Mammary epithelial cell (primary cell): ENCODE measurements at regions of chr3 and their contacts with region 1.

Region 1: GRCh38 chr3:48446425-48447193 is at the start of gene ATRIP:
- DNase-seq: peak; percentile 90
- H3K4me3 ChIP-seq: peak within 1 kb of the TSS; percentile 66 to 83 (median 74)
- H3K27ac ChIP-seq: peak within 1 kb of the TSS; percentile 70
- H3K4me1 ChIP-seq: peaks cover 20% of the 10 kb centered on the region
- H3K27me3 ChIP-seq: no peaks in the 10 kb centered on the region
- CTCF ChIP-seq: no peak
- total RNA-seq, gene ATRIP: 7.2 to 13.2 TPM

Region 2: DNA sequence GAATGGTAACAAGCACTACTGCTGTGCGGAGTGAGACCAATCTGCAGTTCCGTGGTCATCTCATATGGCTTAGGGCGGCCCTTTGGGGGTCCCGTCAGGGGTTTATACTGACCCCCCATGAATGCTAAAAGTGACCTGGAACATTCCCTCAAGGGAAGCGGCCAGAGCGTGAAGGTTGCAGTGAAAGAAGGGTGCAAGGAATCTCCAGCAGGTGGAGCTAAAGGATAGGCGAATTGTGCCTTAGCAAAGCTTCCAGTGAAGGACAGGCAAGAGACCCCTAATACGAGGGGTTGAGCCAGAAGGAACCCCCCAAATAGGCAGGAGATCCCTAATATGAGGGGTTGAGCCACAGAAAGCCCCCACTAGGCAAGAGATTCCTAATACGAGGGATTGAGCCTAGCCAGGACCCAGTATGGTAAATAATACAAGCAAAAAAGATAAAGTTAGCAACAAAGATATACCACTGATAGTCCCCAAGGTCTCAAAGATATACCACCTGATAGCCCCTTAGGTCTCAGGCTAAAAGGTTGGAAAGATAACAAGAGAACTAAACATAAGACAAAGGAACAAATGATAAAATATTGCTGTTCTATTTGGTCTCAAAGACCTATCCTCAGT is 172.9 kb before region 1 on chr3:
- CTCF ChIA-PET with region 1: no interaction called
- dilution Hi-C with region 1: loop called (anchors 5 kb)
- in situ Hi-C with region 1: no loop called
- intact Hi-C with region 1: no loop called
- DNase-seq: peak; percentile 34
- H3K4me3 ChIP-seq: no peak overlapping the region
- H3K27ac ChIP-seq: no peak overlapping the region
- H3K4me1 ChIP-seq: peaks cover 15% of the 10 kb centered on the region
- H3K27me3 ChIP-seq: no peaks in the 10 kb centered on the region
- CTCF ChIP-seq: peak; percentile 84 to 86

Region 3: GRCh38 chr3:48521635-48522034 is 75.0 kb after region 1 on chr3:
- CTCF ChIA-PET with region 1: no interaction called
- dilution Hi-C with region 1: loop called (anchors 5 kb)
- in situ Hi-C with region 1: no loop called
- intact Hi-C with region 1: no loop called
- DNase-seq: no peak
- H3K4me3 ChIP-seq: no peak overlapping the region
- H3K27ac ChIP-seq: no peak overlapping the region
- H3K4me1 ChIP-seq: no peaks in the 10 kb centered on the region
- H3K27me3 ChIP-seq: no peaks in the 10 kb centered on the region
- CTCF ChIP-seq: no peak